Activated B cell treated with CpG ODN at 0.5 μM for 24 hours (primary cell): ENCODE measurements at regions of chr1 and their contacts with region 1.

Region 1: DNA sequence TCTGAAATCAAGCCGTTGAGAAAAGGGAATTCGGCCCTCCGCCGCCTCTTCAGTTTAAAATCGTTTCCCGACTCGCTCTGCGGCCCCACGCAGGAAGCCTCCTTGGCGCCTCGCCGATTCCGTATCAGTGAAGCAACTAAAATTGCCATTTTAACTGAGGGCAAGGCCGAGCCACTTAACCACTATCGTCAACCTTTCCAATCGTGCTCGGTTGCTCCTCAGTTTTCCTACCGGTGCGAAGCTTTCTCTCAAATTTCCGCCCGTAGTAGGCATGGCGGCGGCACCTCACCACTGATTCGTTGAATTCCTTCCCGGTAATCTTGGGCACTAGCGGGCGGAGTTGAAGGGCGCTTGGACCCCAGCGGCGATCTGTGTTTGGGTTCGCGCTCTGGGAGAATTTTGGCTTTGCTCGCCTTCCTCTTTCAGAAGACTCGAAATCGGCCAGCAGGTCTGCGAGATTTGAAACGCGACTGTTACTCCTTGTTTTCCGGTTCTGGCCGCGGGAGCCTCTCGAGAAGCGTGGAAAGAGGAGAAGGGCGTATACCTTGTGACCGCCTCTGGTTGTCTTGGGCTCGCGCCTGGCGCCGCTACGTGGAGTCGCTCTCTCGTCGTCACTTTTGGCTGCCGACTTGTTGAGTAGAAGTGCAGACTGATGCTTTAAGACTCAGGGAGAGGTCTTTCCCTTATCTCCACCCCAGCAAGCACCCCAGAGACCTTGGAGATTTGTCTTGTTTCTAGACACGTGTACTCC is at the starts of genes CENPL and DARS2:
- DNase-seq: peak; percentile 80
- ATAC-seq: peak; percentile 89
- H3K4me3 Mint-ChIP-seq: peak within 1 kb of the TSS; percentile 95
- H3K27ac Mint-ChIP-seq: peak within 1 kb of the TSS; percentile 97
- H3K4me1 Mint-ChIP-seq: peaks cover 28% of the 10 kb centered on the region
- H3K27me3 Mint-ChIP-seq: no peaks in the 10 kb centered on the region
- CTCF ChIP-seq: no peak
- total RNA-seq, gene CENPL: 12.7 and 14.0 TPM in 2 replicates
- total RNA-seq, gene DARS2: 24.0 and 26.0 TPM in 2 replicates

Region 2: DNA sequence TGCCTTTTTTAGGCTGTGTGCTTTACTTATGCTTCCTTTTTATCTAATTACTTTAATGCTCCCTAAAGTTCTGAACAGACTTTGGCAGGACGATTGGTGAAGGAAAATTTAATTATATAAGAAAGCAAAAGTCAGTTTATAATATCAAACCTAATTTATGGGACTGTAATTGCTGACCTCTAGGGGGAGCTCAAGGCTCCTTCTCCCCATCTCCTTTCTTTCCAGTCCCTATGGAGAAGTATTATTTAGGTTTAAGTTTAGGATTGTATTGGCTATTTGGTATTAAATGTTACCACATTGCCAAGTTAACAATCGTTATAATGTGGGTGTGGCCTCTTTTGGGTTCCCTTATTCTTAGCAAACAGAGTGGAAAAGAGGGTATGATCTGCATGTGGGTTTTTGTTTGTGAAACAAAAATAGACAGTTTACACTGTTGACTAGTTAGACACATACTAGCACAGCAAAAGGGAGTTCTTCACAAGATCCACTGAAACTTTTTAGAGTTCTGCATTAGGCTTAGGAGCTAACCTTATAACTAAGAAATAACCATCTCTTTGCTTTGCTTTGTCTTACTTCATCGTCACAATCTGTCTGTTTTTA is 569.2 kb before region 1 on chr1:
- CTCF ChIA-PET with region 1: interaction called, 3 read pairs
- POLR2A ChIA-PET with region 1: no interaction called
- intact Hi-C with region 1: loop called (anchors 5 kb)
- DNase-seq: no peak
- ATAC-seq: no peak
- H3K4me3 Mint-ChIP-seq: no peak overlapping the region
- H3K27ac Mint-ChIP-seq: no peak overlapping the region
- H3K4me1 Mint-ChIP-seq: peaks cover 15% of the 10 kb centered on the region
- H3K27me3 Mint-ChIP-seq: no peaks in the 10 kb centered on the region
- CTCF ChIP-seq: peak; percentile 74

Region 3: GRCh38 chr1:173476664-173477285 is 347.7 kb before region 1 on chr1:
- CTCF ChIA-PET with region 1: no interaction called
- POLR2A ChIA-PET with region 1: interaction called, 10 read pairs
- intact Hi-C with region 1: loop called (anchors 1 kb)
- DNase-seq: peak; percentile 70
- ATAC-seq: peak; percentile 94
- H3K4me3 Mint-ChIP-seq: peak overlapping the region; percentile 92
- H3K27ac Mint-ChIP-seq: peak overlapping the region; percentile 95
- H3K4me1 Mint-ChIP-seq: peaks cover 40% of the 10 kb centered on the region
- H3K27me3 Mint-ChIP-seq: no peaks in the 10 kb centered on the region
- CTCF ChIP-seq: no peak

Region 4: GRCh38 chr1:173663159-173663558 is 161.3 kb before region 1 on chr1:
- CTCF ChIA-PET with region 1: no interaction called
- POLR2A ChIA-PET with region 1: no interaction called
- intact Hi-C with region 1: no loop called
- DNase-seq: no peak
- ATAC-seq: no peak
- H3K4me3 Mint-ChIP-seq: no peak overlapping the region
- H3K27ac Mint-ChIP-seq: no peak overlapping the region
- H3K4me1 Mint-ChIP-seq: no peaks in the 10 kb centered on the region
- H3K27me3 Mint-ChIP-seq: peaks cover 13% of the 10 kb centered on the region
- CTCF ChIP-seq: no peak

Region 5: DNA sequence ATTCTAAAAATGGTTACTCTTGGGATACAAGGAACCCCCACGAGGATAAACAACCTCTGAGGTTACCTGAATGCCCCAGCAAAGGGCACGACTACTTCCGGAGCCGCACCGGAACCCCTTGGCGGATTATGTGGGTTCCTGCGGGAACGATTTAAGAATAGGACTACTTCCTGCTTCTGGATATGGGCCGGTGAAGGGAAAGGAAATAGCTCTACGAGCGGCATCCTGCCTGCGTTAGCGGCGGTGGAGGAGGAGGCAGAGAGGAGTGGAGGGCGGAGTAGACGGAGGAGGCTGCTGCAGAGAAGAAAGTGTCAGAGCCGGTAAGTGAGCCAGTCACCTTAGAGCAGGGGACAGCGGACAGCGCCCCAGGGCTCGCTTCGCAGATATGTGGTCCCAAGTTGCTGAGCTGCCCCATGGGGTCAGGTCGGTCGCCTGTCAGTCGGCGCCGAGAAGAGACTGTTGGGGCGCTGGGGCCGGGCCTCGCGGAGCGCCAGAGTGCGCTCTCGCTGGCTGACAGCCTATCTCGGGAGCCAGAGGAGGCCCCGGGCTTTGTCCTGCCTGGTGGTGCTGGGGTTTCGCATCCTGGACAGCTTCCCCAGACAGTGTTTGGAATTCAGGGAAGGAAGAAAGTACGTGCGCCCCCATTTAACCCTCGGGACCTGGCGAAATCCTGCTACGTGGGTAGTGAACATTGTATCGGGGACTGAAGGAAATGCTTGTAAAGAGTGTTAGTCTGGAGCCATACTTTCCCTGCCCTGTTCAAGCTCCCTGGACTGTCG is 109.6 kb before region 1 on chr1 and contains the start of gene KLHL20:
- CTCF ChIA-PET with region 1: no interaction called
- POLR2A ChIA-PET with region 1: interaction called, 5 read pairs
- intact Hi-C with region 1: loop called (anchors 1 kb)
- DNase-seq: peak; percentile 71
- ATAC-seq: peak; percentile 96
- H3K4me3 Mint-ChIP-seq: peak within 1 kb of the TSS; percentile 93
- H3K27ac Mint-ChIP-seq: peak within 1 kb of the TSS; percentile 89
- H3K4me1 Mint-ChIP-seq: peaks cover 22% of the 10 kb centered on the region
- H3K27me3 Mint-ChIP-seq: peaks cover 14% of the 10 kb centered on the region
- CTCF ChIP-seq: no peak
- total RNA-seq, gene KLHL20: 19.6 and 26.1 TPM in 2 replicates